ENCODE measurements at regions of chr7 and their contacts with region 1.

Region 1: GRCh38 chr7:117737926-117738325 is 135.3 kb downstream of the CTTNBP2 start:
- DNase-seq: no peak
- CTCF ChIP-seq: no peak

Region 2: DNA sequence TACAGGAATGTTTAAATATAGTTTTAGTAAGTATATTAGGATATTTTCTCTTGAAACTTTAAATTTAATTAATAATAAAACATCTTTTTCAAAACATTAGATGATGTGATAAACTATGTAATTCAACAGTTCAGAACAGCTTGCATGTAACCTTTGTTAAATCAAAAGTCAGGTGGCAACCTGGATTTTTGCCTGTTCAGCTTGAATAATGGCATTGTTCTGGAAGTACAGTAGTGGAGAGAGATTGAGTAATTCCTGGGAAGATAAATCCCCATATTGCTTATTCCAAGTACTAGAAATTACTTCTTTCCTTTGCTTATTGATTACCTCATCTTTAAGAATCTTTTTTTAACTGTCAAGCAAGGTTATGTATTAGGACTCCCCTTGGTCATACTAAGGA is 278.2 kb before region 1 on chr7:
- CTCF ChIA-PET with region 1: no interaction called
- POLR2A ChIA-PET with region 1: no interaction called
- DNase-seq: no peak
- CTCF ChIP-seq: no peak

Region 3: DNA sequence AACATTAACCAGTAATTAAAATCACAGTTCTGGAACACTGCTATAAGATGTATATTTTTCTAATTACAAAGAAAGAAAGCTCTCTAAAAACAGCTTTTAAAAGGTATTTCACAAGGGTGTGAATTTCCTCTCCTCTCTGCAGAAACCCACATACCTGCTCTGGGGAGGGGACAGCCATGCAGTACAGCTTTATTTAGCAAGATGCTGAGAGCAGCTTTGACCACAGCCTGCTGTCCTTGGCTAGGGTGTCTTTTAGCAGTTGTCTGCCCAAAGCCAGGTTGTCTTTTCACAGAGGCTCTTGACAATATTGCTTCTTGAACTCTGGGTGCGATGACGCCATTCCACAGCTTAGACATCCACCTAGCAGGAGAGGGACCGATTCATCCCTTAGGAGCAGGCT is 13.0 kb before region 1 on chr7:
- CTCF ChIA-PET with region 1: interaction called, 12 read pairs
- POLR2A ChIA-PET with region 1: no interaction called
- DNase-seq: no peak
- CTCF ChIP-seq: no peak